HCT116 (cell line): ENCODE measurements at regions of chr2 and their contacts with region 1.

Region 1: GRCh38 chr2:20097879-20098714 is 46.7 kb upstream of the LAPTM4A start:
- DNase-seq: peak; percentile 90
- ATAC-seq: peak; percentile 93
- H3K4me3 ChIP-seq: no peak overlapping the region
- H3K27ac ChIP-seq: no peak overlapping the region
- H3K4me1 ChIP-seq: peaks cover 0 to 9% of the 10 kb centered on the region in 2 experiments; a peak in 2 of 4 replicates
- H3K27me3 ChIP-seq: no peaks in the 10 kb centered on the region
- CTCF ChIP-seq: peak; percentile 87 to 98 (median 97)
- POLR2A ChIP-seq: no peak
- RAD21 ChIP-seq: peak; percentile 98

Region 2: DNA sequence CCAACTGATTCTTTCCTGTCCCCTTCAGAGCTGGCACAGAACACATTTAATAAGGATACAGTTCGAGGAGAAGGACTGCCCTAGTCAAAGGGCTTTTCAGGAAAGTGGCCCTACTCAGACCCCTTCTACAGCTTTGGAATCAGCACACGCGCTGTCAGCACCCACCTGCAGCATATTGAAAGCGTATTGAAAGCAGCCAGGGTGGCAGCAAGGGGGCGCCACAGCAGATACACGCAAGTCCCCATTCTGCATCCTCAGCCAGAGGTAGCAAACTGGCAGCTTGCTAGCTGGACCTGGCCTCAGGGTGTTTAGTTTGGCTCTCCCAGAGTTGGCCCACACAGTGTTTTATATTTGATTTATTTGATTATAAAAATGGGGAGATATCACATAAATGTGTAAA is 1407.8 kb before region 1 on chr2:
- CTCF ChIA-PET with region 1: no interaction called
- POLR2A ChIA-PET with region 1: no interaction called
- RAD21 ChIA-PET with region 1: no interaction called
- intact Hi-C with region 1: no loop called
- DNase-seq: peak; percentile 15
- ATAC-seq: peak; percentile 71; the same call in 1 of the 2 replicates
- H3K4me3 ChIP-seq: no peak overlapping the region
- H3K27ac ChIP-seq: no peak overlapping the region
- H3K4me1 ChIP-seq: no peaks in the 10 kb centered on the region
- H3K27me3 ChIP-seq: peaks cover 6% of the 10 kb centered on the region; the same call in 1 of the 2 replicates
- CTCF ChIP-seq: peak; percentile 18 to 69 (median 62); a peak in 5 of 6 replicates
- POLR2A ChIP-seq: no peak
- RAD21 ChIP-seq: peak; percentile 32; the same call in 1 of the 2 replicates

Region 3: DNA sequence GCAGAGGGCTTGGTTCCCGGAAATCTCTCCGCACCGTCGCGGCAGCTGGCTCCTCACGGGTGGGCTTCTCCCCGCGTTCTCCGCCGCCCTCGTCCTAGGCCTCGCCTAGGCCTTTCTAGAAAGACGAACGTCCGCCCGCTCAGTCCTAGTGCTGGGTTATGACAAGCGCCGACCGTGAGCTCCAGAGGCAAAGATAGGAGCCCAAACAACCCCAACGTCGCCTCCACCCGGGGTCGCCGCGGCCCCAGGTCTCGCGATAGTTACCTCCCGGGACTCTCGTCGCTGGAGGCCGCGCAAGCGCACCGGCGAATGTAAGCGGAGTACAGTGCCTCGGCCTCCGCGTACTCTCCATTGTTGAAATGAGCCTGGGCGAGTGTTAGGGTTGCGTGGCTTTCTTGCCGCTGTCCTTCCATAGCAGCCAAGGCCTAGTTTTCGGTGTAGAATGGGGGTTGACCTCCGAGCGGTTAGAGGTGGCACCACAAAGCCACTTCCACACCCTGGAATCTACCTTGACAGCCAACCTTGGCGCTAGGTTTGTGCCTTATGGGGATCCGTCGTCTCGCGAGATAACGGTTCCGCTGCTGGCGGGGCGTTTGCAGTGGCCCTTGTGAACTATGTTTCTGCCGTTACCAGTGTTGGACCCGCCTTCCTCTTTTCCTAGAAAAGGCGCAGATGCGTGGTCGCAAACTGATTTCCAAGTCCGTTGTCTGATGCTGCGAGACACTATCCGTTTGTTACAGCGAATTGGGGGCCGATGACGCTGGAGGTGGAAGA is 196.5 kb before region 1 on chr2 and contains the start of gene TTC32:
- CTCF ChIA-PET with region 1: no interaction called
- POLR2A ChIA-PET with region 1: no interaction called
- RAD21 ChIA-PET with region 1: no interaction called
- intact Hi-C with region 1: loop called (anchors 2 kb)
- DNase-seq: peak; percentile 93
- ATAC-seq: peak; percentile 96
- H3K4me3 ChIP-seq: peak within 1 kb of the TSS; percentile 76 to 91
- H3K27ac ChIP-seq: peak within 1 kb of the TSS; percentile 84
- H3K4me1 ChIP-seq: peaks cover 11 to 18% of the 10 kb centered on the region in 2 experiments
- H3K27me3 ChIP-seq: no peaks in the 10 kb centered on the region
- CTCF ChIP-seq: no peak
- POLR2A ChIP-seq: peak; percentile 88
- RAD21 ChIP-seq: no peak
- total RNA-seq, gene TTC32: 6.3 TPM

Region 4: GRCh38 chr2:19955544-19956422 is 142.3 kb before region 1 on chr2:
- CTCF ChIA-PET with region 1: interaction called, 15 read pairs
- POLR2A ChIA-PET with region 1: no interaction called
- RAD21 ChIA-PET with region 1: interaction called in 1 of 2 experiments, 4 read pairs
- intact Hi-C with region 1: loop called (anchors 1 kb)
- DNase-seq: peak; percentile 65
- ATAC-seq: peak; percentile 100
- H3K4me3 ChIP-seq: no peak overlapping the region
- H3K27ac ChIP-seq: no peak overlapping the region
- H3K4me1 ChIP-seq: no peaks in the 10 kb centered on the region
- H3K27me3 ChIP-seq: no peaks in the 10 kb centered on the region
- CTCF ChIP-seq: peak; percentile 77 to 99 (median 82)
- POLR2A ChIP-seq: no peak
- RAD21 ChIP-seq: peak; percentile 97

Region 5: GRCh38 chr2:20015472-20016083 is 82.5 kb before region 1 on chr2:
- CTCF ChIA-PET with region 1: interaction called, 35 read pairs
- POLR2A ChIA-PET with region 1: interaction called, 3 read pairs
- RAD21 ChIA-PET with region 1: interaction called, 5 to 7 read pairs
- intact Hi-C with region 1: loop called (anchors 1 kb)
- DNase-seq: peak; percentile 26
- ATAC-seq: peak; percentile 74
- H3K4me3 ChIP-seq: no peak overlapping the region
- H3K27ac ChIP-seq: no peak overlapping the region
- H3K4me1 ChIP-seq: no peaks in the 10 kb centered on the region
- H3K27me3 ChIP-seq: no peaks in the 10 kb centered on the region
- CTCF ChIP-seq: peak; percentile 52 to 83 (median 70)
- POLR2A ChIP-seq: no peak
- RAD21 ChIP-seq: peak; percentile 77